Activated naive CD4-positive, alpha-beta T cell treated with anti-CD3 and anti-CD28 coated beads for 36 hours (primary cell): ENCODE measurements at regions of chr2 and their contacts with region 1.

Region 1: DNA sequence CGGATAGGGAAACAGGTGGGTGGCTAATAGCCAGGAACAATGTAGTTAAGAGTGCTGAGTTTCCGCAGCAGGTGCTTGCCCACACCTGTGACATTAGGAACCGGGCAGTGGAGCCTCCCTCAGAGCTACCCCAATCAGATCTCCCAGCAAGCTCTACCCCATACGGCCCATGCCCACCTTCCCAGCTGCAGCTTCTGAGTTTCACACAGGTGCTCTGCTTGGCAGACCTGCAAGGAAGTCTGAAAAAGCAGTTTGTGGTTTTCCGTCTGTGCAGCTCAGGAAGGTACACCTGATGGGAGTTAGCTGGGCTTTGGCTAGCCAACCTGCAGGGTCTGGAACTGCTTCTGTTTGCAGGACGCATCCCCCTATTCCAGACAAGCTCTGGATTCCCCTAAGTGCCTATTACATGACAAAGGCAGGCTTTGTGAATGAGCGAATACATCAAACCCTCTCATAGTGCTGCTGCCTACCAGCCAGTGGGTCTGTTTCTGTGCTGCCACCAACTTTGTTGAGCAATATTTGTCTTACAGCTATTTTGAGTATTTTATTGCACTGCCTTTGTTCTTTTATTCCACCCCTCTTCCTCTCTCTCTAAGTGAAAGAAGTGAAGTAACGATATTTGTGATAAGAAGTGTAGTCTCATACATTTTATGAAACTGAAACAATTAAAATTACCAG is 24.7 kb upstream of the CEP68 start:
- DNase-seq: peak; percentile 18
- H3K4me3 Mint-ChIP-seq: no peak overlapping the region
- H3K27ac Mint-ChIP-seq: no peak overlapping the region
- H3K4me1 Mint-ChIP-seq: peaks cover 23% of the 10 kb centered on the region
- H3K27me3 Mint-ChIP-seq: no peaks in the 10 kb centered on the region

Region 2: DNA sequence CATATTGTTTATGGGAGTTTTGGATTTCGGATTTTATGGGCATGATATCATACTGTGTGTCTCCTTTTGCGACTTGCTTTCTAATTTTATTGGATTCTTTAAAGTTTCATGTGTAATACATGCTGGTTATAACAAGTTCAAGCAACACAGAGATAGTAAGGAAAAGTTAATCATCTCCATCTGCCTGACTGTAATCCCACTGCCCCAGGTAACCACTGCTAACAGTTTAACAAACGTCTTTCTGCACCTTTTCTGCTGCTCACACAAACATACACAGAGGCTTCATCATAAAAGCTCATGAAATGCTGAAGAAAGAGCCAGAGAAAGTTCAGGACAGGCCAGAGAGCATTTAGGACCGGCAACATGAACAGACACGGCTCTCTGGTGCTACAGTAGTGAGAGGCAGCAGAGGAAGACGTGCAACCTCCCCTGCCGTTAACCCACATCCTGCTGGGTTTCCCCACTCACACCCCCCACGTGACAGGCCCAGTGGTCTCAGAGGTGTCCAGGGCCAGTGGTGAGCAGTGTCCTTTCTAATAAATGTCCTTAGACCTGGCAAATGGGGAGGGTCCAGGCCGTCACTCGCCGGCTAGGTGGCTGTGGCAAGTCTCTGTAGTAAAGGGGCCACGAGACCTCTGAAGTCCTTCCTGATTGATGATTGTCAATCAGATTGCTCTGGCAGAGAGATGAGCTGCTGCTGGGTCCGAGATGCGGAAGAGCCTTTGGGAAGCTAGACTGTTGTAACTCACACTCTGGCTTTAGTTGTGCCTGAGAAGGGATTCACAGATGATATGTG is 85.3 kb before region 1 on chr2:
- CTCF ChIA-PET with region 1: no interaction called
- intact Hi-C with region 1: loop called (anchors 1 kb)
- DNase-seq: peak; percentile 84
- H3K4me3 Mint-ChIP-seq: peak overlapping the region; percentile 64
- H3K27ac Mint-ChIP-seq: peak overlapping the region; percentile 81
- H3K4me1 Mint-ChIP-seq: peaks cover 26% of the 10 kb centered on the region
- H3K27me3 Mint-ChIP-seq: no peaks in the 10 kb centered on the region

Region 3: GRCh38 chr2:65075605-65076344 is 44.3 kb after region 1 on chr2:
- CTCF ChIA-PET with region 1: no interaction called
- intact Hi-C with region 1: no loop called
- DNase-seq: no peak
- H3K4me3 Mint-ChIP-seq: no peak overlapping the region
- H3K27ac Mint-ChIP-seq: no peak overlapping the region
- H3K4me1 Mint-ChIP-seq: peaks cover under 1% of the 10 kb centered on the region
- H3K27me3 Mint-ChIP-seq: no peaks in the 10 kb centered on the region